Activated CD8-positive, alpha-beta T cell treated with anti-CD3 and anti-CD28 coated beads, Interleukin-2, amount 10 ng/mL, durations not matched to agents 7 days and 5 days (primary cell): ENCODE measurements at regions of chr12 and their contacts with region 1.

Region 1: GRCh38 chr12:66279123-66279712 is 23.1 kb upstream of the HELB start:
- DNase-seq: peak; percentile 67
- ATAC-seq: peak; percentile 79
- H3K4me3 Mint-ChIP-seq: no peak overlapping the region
- H3K27ac Mint-ChIP-seq: no peak overlapping the region
- H3K4me1 Mint-ChIP-seq: peaks cover 13% of the 10 kb centered on the region
- H3K27me3 Mint-ChIP-seq: no peaks in the 10 kb centered on the region

Region 2: GRCh38 chr12:65779091-65779642 is 500.1 kb before region 1 on chr12:
- CTCF ChIA-PET with region 1: no interaction called
- POLR2A ChIA-PET with region 1: no interaction called
- DNase-seq: no peak
- ATAC-seq: no peak
- H3K4me3 Mint-ChIP-seq: no peak overlapping the region
- H3K27ac Mint-ChIP-seq: no peak overlapping the region
- H3K4me1 Mint-ChIP-seq: no peaks in the 10 kb centered on the region
- H3K27me3 Mint-ChIP-seq: peaks cover 9% of the 10 kb centered on the region

Region 3: DNA sequence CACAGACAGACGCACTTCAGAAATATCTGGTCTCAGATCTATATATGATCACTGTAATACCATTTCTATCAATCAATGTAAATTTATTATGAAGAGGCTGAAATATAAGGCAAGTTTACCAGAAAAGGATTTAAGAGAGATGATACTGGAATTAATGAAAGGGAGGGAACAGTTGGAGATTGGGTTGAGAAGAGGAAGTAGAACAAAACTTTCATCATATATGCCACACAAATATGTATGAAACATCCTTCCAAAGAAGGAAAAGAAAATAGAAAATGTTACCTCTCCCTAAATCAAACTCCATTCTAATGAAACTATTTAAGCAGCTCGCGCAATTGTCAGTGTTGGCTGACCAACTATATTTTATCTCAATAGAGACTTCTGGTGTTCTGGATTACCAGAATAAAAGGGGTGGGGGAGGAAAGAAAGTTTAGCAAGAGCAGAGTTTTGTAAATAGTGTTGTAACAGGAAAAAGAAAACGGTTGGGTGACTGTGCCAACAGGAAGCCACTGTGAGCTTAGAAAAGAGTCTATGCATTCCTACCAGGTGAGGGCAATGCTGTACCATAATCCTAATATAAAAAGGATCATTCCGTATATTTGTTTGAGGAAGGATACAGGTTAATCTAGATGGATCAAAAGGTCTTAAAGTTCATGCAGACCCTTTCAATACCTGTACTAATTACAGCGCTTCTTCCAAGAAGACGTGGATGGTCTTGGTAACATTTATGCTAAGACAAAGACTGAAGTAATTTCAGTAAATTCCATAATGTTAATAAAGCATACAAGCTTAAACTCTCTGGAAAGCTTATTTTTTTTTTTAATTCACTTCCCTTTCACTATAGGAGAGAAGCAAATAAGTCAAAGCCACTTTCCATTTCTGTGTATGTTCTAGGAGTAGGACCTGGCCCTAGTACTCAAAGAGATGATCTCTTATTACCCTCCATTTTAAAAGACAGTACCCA is 134.1 kb before region 1 on chr12:
- CTCF ChIA-PET with region 1: interaction called, 10 read pairs
- POLR2A ChIA-PET with region 1: no interaction called
- DNase-seq: peak; percentile 28
- ATAC-seq: peak; percentile 49
- H3K4me3 Mint-ChIP-seq: no peak overlapping the region
- H3K27ac Mint-ChIP-seq: peak overlapping the region; percentile 78
- H3K4me1 Mint-ChIP-seq: peaks cover 17% of the 10 kb centered on the region
- H3K27me3 Mint-ChIP-seq: no peaks in the 10 kb centered on the region

Region 4: DNA sequence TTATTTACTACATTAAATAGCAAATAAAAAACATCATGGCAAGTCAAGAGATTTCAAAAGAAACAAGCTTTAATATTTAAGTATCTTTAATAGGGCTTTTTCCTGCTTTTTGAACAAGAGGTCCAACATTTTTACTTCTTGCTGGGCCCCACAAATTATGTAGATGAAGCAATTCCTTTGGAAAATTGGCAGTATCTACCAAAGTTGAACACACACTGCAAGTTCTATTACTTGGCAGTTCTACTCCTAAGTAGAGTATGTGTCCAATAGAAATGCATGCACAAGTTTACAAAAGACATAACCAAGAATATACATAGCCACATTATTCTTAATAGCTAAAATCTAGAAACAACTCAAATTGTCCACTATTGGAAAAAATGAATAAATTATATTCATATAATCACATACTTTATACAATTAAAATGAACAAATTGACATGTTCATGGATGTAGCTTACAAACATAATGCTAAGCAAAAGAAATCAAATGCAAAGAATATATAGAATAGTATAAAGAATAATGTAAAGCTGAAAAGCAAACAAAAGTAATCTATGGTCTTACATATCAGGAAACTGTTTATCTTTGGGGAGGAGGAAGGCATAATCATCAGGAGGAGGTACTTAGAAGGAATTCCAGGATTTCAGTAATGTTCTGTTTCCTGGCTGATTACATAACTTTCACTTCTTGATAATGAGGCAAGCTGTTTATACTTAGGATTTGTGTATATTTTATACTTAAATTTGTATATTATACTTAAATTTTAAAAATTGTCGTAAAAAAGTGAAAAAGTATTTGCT is 102.9 kb before region 1 on chr12:
- CTCF ChIA-PET with region 1: no interaction called
- POLR2A ChIA-PET with region 1: no interaction called
- DNase-seq: no peak
- ATAC-seq: no peak
- H3K4me3 Mint-ChIP-seq: no peak overlapping the region
- H3K27ac Mint-ChIP-seq: no peak overlapping the region
- H3K4me1 Mint-ChIP-seq: no peaks in the 10 kb centered on the region
- H3K27me3 Mint-ChIP-seq: peaks cover 34% of the 10 kb centered on the region

Region 5: DNA sequence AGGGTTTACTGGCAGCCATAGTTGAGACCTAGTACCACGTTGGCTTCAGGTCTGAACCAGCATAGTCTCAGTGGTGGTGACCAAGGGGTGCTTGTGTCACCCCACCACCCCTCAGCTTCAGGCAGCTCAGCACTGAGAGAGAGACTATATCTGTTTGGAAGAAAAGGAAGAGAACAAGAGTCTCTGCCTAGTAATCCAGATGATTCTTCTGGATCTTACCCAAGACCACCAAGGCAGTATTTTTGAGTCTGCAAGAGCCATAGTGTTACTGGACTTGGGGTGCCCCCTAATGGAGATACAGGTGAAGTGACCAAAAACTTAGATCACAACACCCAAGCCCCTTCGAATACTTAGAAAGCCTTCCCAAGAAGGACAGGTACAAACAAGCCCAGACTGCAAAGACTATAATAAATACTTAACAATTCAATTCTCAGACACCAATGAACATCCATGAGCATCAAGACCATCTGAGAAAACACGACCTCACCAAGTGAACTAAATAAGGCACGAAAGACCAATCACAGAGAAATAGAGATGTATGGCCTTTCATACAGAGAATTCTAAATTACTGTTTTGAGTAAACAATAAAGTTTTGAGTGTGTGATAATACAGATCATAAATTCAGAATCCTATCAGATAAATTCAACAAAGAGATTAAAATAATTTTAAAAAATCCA is 130.1 kb after region 1 on chr12:
- CTCF ChIA-PET with region 1: interaction called, 24 read pairs
- POLR2A ChIA-PET with region 1: no interaction called
- DNase-seq: peak; percentile 63
- ATAC-seq: peak; percentile 42
- H3K4me3 Mint-ChIP-seq: no peak overlapping the region
- H3K27ac Mint-ChIP-seq: no peak overlapping the region
- H3K4me1 Mint-ChIP-seq: no peaks in the 10 kb centered on the region
- H3K27me3 Mint-ChIP-seq: peaks cover 8% of the 10 kb centered on the region